Breast epithelium (tissue), 4 donors: ENCODE measurements at regions of chr17 and their contacts with region 1.

Region 1: DNA sequence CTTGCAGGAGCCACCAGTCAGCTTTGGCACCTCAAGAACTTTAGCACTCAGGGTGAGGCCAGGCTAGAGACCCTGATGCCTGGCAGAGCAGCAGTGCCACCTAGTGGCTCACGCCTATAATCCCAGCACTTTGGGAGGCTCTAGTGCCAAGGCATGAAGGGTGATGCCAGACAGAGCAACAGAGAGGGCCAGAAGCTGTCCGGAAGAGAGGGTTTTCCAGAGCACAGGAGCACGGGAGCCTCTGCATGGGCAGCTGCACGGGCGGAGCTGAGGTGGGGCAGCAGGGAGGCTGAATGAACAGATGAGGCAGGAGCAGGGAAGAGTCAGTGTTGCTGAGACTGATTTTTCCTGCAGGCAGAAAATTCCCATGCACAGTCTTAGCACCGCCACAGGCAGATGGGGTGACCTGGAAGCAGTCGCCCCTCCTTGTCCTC is 38.9 kb downstream of the MYH3 start:
- DNase-seq: peak in 1 of 2 donors; percentile 49
- H3K4me3 ChIP-seq: no peak overlapping the region
- H3K27ac ChIP-seq: no peak overlapping the region
- H3K4me1 ChIP-seq: no peaks in the 10 kb centered on the region
- H3K27me3 ChIP-seq: no peaks in the 10 kb centered on the region
- CTCF ChIP-seq: peak; percentile 52 to 74 (median 57)
- POLR2A ChIP-seq: no peak

Region 2: GRCh38 chr17:9798724-9799123 is 819.5 kb before region 1 on chr17:
- intact Hi-C with region 1: loop called (anchors 5 kb)
- DNase-seq: no peak
- H3K4me3 ChIP-seq: no peak overlapping the region
- H3K27ac ChIP-seq: no peak overlapping the region
- H3K4me1 ChIP-seq: no peaks in the 10 kb centered on the region
- H3K27me3 ChIP-seq: no peaks in the 10 kb centered on the region
- CTCF ChIP-seq: no peak
- POLR2A ChIP-seq: no peak

Region 3: DNA sequence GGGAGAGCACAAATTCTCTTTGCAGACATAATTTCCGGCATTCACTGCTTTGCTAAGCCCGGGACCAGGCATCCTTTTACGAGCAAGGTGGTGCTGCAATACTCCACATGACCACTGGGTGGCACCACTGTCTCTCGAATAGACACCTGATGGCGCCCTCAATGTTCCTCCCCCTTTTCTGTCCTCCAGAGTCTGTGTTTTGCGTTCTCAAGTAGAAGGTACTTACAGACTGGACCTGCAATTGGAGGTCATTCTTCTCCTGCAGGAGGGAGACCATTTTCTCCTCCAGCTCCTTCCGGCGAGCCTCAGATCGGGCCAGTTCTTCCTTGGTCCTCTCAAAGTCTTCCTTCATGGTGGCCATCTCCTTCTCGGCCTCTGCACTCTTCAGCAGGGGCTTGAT is 290.6 kb before region 1 on chr17:
- intact Hi-C with region 1: loop called (anchors 10 kb)
- DNase-seq: peak; percentile 35 to 73
- H3K4me3 ChIP-seq: no peak overlapping the region
- H3K27ac ChIP-seq: no peak overlapping the region
- H3K4me1 ChIP-seq: no peaks in the 10 kb centered on the region
- H3K27me3 ChIP-seq: no peaks in the 10 kb centered on the region
- CTCF ChIP-seq: peak; percentile 60 to 76 (median 65)
- POLR2A ChIP-seq: no peak